Left cardiac atrium (tissue), 4 donors: ENCODE measurements at regions of chr11 and their contacts with region 1.

Region 1: GRCh38 chr11:126607374-126607773 is 251.9 kb downstream of the ST3GAL4 start:
- DNase-seq: peak; percentile 41
- ATAC-seq: peak; percentile 81 to 89

Region 2: GRCh38 chr11:126153972-126154371 is 453.4 kb before region 1 on chr11:
- intact Hi-C with region 1: no loop called
- DNase-seq: no peak
- ATAC-seq: no peak

Region 3: DNA sequence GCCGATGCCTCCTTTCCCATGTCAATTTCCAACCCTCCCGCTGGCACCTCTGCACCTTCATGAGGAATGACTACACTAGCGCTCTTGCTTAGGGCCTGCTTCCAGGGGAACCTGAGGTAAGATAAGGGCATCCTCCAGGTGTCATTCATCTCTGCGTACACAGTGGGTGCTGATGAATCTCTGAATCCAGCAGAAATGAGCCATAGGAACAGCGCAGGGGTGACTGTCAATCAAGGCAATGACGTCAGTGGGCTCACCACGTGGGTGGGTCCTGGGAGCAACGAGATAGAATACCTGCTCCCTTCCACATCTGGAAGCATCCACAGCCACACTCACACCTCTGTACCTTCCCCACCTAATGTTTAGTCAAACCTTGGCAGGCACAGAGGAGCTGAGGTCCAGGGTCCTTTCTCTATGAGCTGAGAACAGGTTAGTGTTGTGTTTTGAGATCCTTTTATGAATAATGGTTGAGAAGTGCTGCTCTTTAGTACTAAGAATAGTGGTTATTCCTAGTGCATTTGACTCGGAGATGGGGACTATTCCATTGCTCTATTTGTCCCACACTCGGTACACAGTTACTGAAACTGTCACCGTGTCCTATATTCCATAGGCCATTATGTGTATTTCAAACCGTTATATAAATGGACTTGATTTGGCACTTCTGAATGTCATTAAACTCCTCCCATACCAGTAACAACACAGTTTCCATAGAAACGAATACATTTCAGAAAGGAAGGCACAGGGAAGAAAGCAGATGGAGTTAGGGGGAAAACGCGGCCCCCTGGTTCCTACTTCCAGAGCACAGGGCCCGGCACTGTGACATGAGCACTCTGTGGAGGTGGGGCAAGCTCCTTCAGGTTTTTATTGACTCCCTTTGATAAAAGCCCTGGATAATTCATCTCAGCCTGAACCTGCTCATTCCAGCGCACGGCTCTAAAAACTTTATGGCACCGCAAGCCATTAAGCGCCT is 58.5 kb before region 1 on chr11:
- intact Hi-C with region 1: no loop called
- DNase-seq: no peak
- ATAC-seq: no peak

Region 4: GRCh38 chr11:126732981-126733380 is 125.6 kb after region 1 on chr11:
- intact Hi-C with region 1: no loop called
- DNase-seq: no peak
- ATAC-seq: no peak

Region 5: GRCh38 chr11:126989942-126990715 is 382.8 kb after region 1 on chr11:
- intact Hi-C with region 1: loop called in 1 of 2 experiments (anchors 5 kb)
- DNase-seq: peak; percentile 76
- ATAC-seq: peak; percentile 72 to 89

Region 6: GRCh38 chr11:127345819-127346459 is 738.6 kb after region 1 on chr11:
- intact Hi-C with region 1: loop called in 1 of 2 experiments (anchors 5 kb)
- DNase-seq: peak; percentile 43
- ATAC-seq: no peak